ENCODE measurements at regions of chrX and their contacts with region 1.

Region 1: DNA sequence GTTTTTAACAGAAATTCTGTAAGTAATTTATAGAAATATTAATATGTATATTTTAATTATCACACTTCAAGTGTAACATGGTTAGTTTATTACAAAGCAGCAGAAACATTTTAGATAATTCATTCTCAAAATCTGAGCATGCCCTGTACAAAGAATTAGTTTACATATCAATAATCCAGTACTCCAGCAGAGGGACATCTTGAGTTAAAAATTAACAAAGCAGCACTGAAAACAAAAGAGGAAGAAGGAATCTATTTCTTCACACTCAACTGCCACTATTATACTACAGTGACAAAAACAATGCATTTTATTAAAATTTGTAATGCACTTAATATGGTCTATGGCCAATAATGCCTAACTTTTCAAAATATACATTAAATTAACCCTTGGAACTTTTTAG is 179.1 kb upstream of the KLHL4 start:
- DNase-seq: no peak
- ATAC-seq: peak in 3 of 4 donors; percentile 40 to 54 (median 44)
- H3K4me3 ChIP-seq: no peak overlapping the region
- H3K27ac ChIP-seq: no peak overlapping the region
- H3K4me1 ChIP-seq: no peaks in the 10 kb centered on the region
- H3K27me3 ChIP-seq: peaks cover 0 to 38% (median 7%) of the 10 kb centered on the region in 4 donors
- CTCF ChIP-seq: peak in 1 of 4 donors; percentile 15

Region 2: GRCh38 chrX:87265518-87265917 is 73.0 kb before region 1 on chrX:
- intact Hi-C with region 1: no loop called
- DNase-seq: no peak
- ATAC-seq: no peak
- H3K4me3 ChIP-seq: no peak overlapping the region
- H3K27ac ChIP-seq: no peak overlapping the region
- H3K4me1 ChIP-seq: no peaks in the 10 kb centered on the region
- H3K27me3 ChIP-seq: no peaks in the 10 kb centered on the region
- CTCF ChIP-seq: no peak

Region 3: DNA sequence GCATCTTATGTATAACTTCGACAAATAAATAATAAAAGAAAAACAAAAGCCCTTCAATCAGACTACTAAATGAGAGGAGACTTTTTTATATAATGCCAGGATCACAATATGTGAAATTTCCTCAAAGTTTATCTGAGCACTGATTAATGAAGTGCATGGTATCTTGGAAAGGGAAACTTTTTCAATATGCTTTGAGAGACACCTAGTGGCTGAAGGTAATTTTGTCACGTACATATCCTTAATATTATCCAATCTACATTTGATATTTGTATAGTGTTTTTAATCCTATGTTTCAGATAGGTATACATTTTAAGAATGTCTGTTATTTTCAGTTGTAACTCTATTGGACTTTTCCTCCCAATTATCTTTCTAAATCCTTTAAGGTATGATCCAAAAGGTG is 325.9 kb after region 1 on chrX:
- intact Hi-C with region 1: loop called in 2 of 3 experiments (anchors 10 kb)
- DNase-seq: no peak
- ATAC-seq: peak in 3 of 4 donors; percentile 53 to 64 (median 55)
- H3K4me3 ChIP-seq: no peak overlapping the region
- H3K27ac ChIP-seq: no peak overlapping the region
- H3K4me1 ChIP-seq: no peaks in the 10 kb centered on the region
- H3K27me3 ChIP-seq: peaks cover 0 to 7% (median 2%) of the 10 kb centered on the region in 4 donors
- CTCF ChIP-seq: peak in 3 of 4 donors; percentile 33 to 37 (median 35)

Region 4: GRCh38 chrX:88284844-88285243 is 946.3 kb after region 1 on chrX:
- intact Hi-C with region 1: no loop called
- DNase-seq: peak in 4 of 6 donors; percentile 24 to 65 (median 47)
- ATAC-seq: peak; percentile 82 to 96 (median 88)
- H3K4me3 ChIP-seq: no peak overlapping the region
- H3K27ac ChIP-seq: no peak overlapping the region
- H3K4me1 ChIP-seq: no peaks in the 10 kb centered on the region
- H3K27me3 ChIP-seq: no peaks in the 10 kb centered on the region
- CTCF ChIP-seq: no peak

Measured in pancreas (tissue), 10 donors.